CD8-positive, alpha-beta T cell (primary cell): ENCODE measurements at regions of chr7 and their contacts with region 1.

Region 1: DNA sequence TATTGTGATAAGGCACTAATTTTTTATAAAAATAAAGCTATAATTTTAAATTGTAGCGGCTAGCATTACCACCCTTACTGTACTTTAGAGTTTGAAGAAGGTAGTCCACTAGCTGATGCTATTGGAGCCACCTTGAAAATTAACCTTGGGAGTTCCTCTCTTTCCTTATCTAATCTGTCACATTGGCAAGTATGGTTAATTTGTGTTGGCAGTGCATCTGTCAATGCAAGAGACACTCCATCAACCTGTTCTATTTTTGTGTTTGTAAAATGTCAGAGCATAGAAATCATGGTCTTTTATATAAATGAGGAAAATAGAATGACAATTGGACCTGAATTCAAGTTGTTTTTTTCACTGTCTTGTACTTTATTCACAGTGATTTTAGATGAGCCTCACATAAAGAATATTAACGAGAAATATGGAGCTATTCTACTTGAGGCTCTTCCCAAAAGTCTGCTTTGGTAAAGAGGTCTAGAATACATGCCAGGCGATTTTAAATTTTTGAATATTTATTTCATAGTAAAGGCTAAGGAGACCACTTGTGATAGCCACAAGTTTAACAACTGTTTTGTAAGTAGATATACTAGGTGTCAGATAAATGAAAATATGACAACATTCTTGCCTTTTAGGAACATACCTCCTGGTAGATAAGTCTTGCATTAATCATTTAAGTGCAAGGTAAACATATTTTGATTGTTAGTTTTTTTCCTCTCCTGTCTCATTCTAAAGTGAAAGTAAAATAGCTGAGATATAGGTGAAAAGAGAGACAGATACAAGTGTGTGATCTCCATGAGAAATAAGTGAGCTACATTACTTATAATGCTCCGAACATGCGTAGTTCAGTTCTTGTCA is 20.8 kb downstream of the GLCCI1 start:
- DNase-seq: peak in 1 of 9 experiments; percentile 26
- ATAC-seq: peak; percentile 44
- H3K4me3 ChIP-seq: peak overlapping the region; percentile 15 to 28
- H3K4me3 Mint-ChIP-seq: peak overlapping the region; percentile 75
- H3K27ac ChIP-seq: peak overlapping the region; percentile 20 to 59
- H3K27ac Mint-ChIP-seq: peak overlapping the region; percentile 81
- H3K4me1 ChIP-seq: peaks cover 21% of the 10 kb centered on the region
- H3K4me1 Mint-ChIP-seq: peaks cover 63% of the 10 kb centered on the region
- H3K27me3 ChIP-seq: no peaks in the 10 kb centered on the region
- H3K27me3 Mint-ChIP-seq: no peaks in the 10 kb centered on the region
- CTCF ChIP-seq: no peak

Region 2: GRCh38 chr7:8003077-8003476 is 13.7 kb after region 1 on chr7:
- CTCF ChIA-PET with region 1: no interaction called
- POLR2A ChIA-PET with region 1: no interaction called
- intact Hi-C with region 1: loop called in 1 of 2 experiments (anchors 1 kb)
- DNase-seq: no peak
- ATAC-seq: no peak
- H3K4me3 ChIP-seq: no peak overlapping the region
- H3K4me3 Mint-ChIP-seq: no peak overlapping the region
- H3K27ac ChIP-seq: no peak overlapping the region
- H3K27ac Mint-ChIP-seq: peak overlapping the region; percentile 20
- H3K4me1 ChIP-seq: no peaks in the 10 kb centered on the region
- H3K4me1 Mint-ChIP-seq: peaks cover 18% of the 10 kb centered on the region
- H3K27me3 ChIP-seq: no peaks in the 10 kb centered on the region
- H3K27me3 Mint-ChIP-seq: no peaks in the 10 kb centered on the region
- CTCF ChIP-seq: no peak

Region 3: GRCh38 chr7:8065356-8065813 is 76.0 kb after region 1 on chr7:
- CTCF ChIA-PET with region 1: no interaction called
- POLR2A ChIA-PET with region 1: no interaction called
- intact Hi-C with region 1: no loop called
- DNase-seq: no peak
- ATAC-seq: no peak
- H3K4me3 ChIP-seq: no peak overlapping the region
- H3K4me3 Mint-ChIP-seq: no peak overlapping the region
- H3K27ac ChIP-seq: no peak overlapping the region
- H3K27ac Mint-ChIP-seq: no peak overlapping the region
- H3K4me1 ChIP-seq: no peaks in the 10 kb centered on the region
- H3K4me1 Mint-ChIP-seq: peaks cover 54% of the 10 kb centered on the region
- H3K27me3 ChIP-seq: no peaks in the 10 kb centered on the region
- H3K27me3 Mint-ChIP-seq: no peaks in the 10 kb centered on the region
- CTCF ChIP-seq: no peak